ENCODE measurements at regions of chr2 and their contacts with region 1.

Region 1: DNA sequence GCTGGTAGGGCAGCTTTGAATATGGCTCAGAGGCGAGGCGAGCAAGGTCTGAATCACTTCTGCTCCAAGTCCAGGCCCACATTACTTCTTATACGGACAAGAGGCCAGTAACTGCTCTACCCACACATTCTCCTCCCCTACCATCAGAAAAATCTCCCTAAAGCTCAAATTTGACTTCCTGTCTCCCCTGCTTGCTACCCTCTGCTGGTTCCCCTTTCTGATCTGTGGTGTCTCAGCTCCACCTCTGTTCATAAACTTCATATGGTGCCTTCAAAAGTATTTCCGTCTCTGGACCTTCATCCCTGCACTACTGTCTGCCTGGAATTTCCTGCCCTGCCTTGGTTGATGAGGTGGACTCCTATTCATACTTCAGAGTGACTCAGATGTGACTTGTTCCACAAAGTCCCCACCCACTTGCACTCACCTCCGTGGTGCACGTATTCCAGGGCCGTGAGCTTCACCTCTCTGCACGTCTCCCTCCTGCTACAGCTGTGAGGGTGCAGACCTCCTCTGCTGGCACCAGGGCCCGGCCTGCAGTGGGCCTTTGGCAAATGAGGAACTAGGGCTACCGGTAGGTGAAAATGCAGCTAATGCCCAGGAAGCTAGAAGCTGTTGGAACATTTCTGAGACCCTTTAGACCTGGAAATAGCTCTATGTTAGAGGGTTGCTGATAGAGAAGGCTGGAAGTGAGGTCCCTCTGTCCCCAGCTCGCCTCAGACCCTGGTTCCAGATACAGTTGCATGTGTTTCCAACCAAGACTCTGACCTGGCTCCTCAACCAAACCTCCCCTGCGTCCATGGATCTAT is 24.6 kb upstream of the KCMF1 start:
- DNase-seq: peak; percentile 75
- H3K4me3 Mint-ChIP-seq: peak overlapping the region; percentile 31
- H3K27ac Mint-ChIP-seq: peak overlapping the region; percentile 89
- H3K4me1 Mint-ChIP-seq: peaks cover 52% of the 10 kb centered on the region
- H3K27me3 Mint-ChIP-seq: no peaks in the 10 kb centered on the region

Region 2: GRCh38 chr2:84970868-84971509 is 24.6 kb after region 1 on chr2 and contains the start of gene KCMF1:
- CTCF ChIA-PET with region 1: interaction called, 23 read pairs
- DNase-seq: peak; percentile 82
- H3K4me3 Mint-ChIP-seq: peak within 1 kb of the TSS; percentile 95
- H3K27ac Mint-ChIP-seq: peak within 1 kb of the TSS; percentile 100
- H3K4me1 Mint-ChIP-seq: peaks cover 51% of the 10 kb centered on the region
- H3K27me3 Mint-ChIP-seq: no peaks in the 10 kb centered on the region

Region 3: GRCh38 chr2:85015653-85016360 is 69.4 kb after region 1 on chr2:
- CTCF ChIA-PET with region 1: interaction called, 11 read pairs
- DNase-seq: no peak
- H3K4me3 Mint-ChIP-seq: no peak overlapping the region
- H3K27ac Mint-ChIP-seq: peak overlapping the region; percentile 24
- H3K4me1 Mint-ChIP-seq: peaks cover 59% of the 10 kb centered on the region
- H3K27me3 Mint-ChIP-seq: no peaks in the 10 kb centered on the region

Region 4: GRCh38 chr2:85066874-85067351 is 120.5 kb after region 1 on chr2:
- CTCF ChIA-PET with region 1: no interaction called
- DNase-seq: peak; percentile 62
- H3K4me3 Mint-ChIP-seq: no peak overlapping the region
- H3K27ac Mint-ChIP-seq: no peak overlapping the region
- H3K4me1 Mint-ChIP-seq: peaks cover 3% of the 10 kb centered on the region
- H3K27me3 Mint-ChIP-seq: peaks cover 61% of the 10 kb centered on the region

Region 5: DNA sequence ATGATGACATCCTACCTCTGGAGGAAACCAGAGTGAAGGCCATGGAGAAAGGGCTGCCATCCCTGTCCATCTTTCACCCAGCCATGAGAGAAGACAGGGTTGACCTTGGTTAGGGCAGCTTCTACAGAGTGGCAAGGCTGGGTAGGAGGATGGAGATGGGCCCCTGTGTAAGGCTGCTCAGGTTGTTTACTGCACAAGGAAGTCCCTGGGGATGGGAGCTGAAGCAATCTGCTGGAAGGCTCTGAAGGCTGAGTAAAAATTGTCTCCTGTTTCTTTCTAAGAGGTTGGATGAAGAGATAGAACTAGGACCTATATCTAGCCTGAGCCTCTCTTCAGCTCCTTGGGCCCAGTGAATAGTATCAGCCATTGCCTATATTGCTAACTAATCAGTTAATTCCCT is 422.5 kb after region 1 on chr2:
- CTCF ChIA-PET with region 1: no interaction called
- DNase-seq: no peak
- H3K4me3 Mint-ChIP-seq: no peak overlapping the region
- H3K27ac Mint-ChIP-seq: no peak overlapping the region
- H3K4me1 Mint-ChIP-seq: no peaks in the 10 kb centered on the region
- H3K27me3 Mint-ChIP-seq: no peaks in the 10 kb centered on the region